Tibial artery (tissue), 4 donors: ENCODE measurements at regions of chr1 and their contacts with region 1.

Region 1: DNA sequence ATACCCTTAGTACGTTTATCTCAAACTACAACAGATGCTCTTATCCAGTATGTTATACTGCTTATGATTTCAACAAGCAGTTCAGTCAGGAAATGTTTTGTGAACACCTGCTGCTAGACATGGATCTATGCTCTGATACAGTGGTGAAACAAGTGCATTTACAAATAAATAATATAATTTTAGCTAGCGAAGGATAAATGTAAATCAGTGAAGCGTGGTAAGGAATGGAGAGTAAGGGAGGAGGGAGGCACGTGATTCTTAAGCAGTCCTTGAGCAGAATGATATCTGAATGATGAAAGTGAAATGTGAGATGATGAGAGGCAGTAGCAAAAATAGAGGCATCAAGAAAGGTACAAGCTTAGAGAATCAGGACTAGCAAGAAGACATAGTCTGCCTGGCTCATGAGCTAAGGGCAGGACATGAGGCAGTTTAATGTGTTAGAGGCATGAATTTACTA is 6.3 kb downstream of the TSNAX start:
- DNase-seq: no peak
- H3K4me3 ChIP-seq: no peak overlapping the region
- H3K27ac ChIP-seq: no peak overlapping the region
- H3K4me1 ChIP-seq: peaks cover 0 to 43% (median 7%) of the 10 kb centered on the region in 4 donors
- H3K27me3 ChIP-seq: no peaks in the 10 kb centered on the region
- CTCF ChIP-seq: no peak

Region 2: GRCh38 chr1:231337472-231338269 is 197.1 kb before region 1 on chr1 and contains the start of gene EXOC8:
- intact Hi-C with region 1: loop called (anchors 5 kb)
- DNase-seq: peak; percentile 92 to 98
- H3K4me3 ChIP-seq: peak within 1 kb of the TSS; percentile 93 to 97
- H3K27ac ChIP-seq: peak within 1 kb of the TSS; percentile 79 to 89
- H3K4me1 ChIP-seq: peaks cover 5 to 56% (median 41%) of the 10 kb centered on the region in 4 donors
- H3K27me3 ChIP-seq: no peaks in the 10 kb centered on the region
- CTCF ChIP-seq: no peak

Region 3: GRCh38 chr1:231666220-231666936 is 131.6 kb after region 1 on chr1:
- intact Hi-C with region 1: no loop called
- DNase-seq: no peak
- H3K4me3 ChIP-seq: no peak overlapping the region
- H3K27ac ChIP-seq: no peak overlapping the region
- H3K4me1 ChIP-seq: no peaks in the 10 kb centered on the region
- H3K27me3 ChIP-seq: no peaks in the 10 kb centered on the region
- CTCF ChIP-seq: no peak

Region 4: GRCh38 chr1:231806623-231807495 is 272.1 kb after region 1 on chr1:
- intact Hi-C with region 1: no loop called
- DNase-seq: peak in 1 of 2 donors; percentile 31
- H3K4me3 ChIP-seq: no peak overlapping the region
- H3K27ac ChIP-seq: no peak overlapping the region
- H3K4me1 ChIP-seq: no peaks in the 10 kb centered on the region
- H3K27me3 ChIP-seq: no peaks in the 10 kb centered on the region
- CTCF ChIP-seq: no peak